BJ (cell line): ENCODE measurements at regions of chr3 and their contacts with region 1.

Region 1: DNA sequence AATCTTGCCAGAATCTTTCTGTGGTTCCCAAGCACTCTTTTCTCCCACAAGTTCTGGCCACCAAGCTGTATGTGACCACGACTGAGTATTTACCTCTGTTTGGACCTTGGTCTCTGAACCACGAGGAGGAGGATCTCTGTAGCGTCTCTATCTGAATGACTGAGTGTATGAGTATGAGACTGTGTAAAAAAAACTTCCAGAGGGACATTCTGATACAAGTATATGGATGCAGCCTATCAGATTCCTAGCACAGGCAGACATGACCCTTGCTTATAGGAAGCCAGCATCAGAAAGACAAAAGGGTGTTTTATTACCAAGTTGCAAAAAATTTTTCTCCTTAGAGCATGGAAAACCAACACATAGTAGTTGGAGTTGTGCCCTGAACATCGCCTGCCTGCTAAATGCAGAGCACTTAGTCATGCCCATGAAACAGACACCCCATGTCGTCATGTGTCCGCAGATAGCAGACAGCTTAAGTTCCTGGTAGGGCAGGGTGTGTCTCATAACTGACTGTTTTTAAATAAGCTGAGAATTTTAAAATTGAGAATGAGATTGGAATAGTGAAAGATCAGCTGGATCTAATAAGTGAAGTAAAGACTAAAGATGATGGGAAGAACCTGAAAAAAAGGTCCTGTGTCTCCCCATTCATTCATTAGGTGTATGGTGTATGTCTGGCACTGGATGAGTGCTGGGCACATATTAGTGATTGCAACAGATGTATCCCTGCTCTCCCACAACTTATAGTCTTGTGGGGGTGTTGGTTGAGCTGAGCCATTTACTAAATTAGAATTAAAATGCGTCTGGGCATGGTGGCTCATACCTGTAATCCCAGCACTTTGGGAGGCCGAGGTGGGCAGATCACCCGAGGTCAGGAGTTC is 30.9 kb downstream of the DAG1 start:
- DNase-seq: peak; percentile 95
- H3K4me3 ChIP-seq: no peak overlapping the region
- H3K27me3 ChIP-seq: no peaks in the 10 kb centered on the region
- CTCF ChIP-seq: no peak

Region 2: GRCh38 chr3:49305608-49306007 is 195.4 kb before region 1 on chr3:
- CTCF ChIA-PET with region 1: no interaction called
- POLR2A ChIA-PET with region 1: no interaction called
- DNase-seq: no peak
- H3K4me3 ChIP-seq: no peak overlapping the region
- H3K27me3 ChIP-seq: no peaks in the 10 kb centered on the region
- CTCF ChIP-seq: no peak

Region 3: DNA sequence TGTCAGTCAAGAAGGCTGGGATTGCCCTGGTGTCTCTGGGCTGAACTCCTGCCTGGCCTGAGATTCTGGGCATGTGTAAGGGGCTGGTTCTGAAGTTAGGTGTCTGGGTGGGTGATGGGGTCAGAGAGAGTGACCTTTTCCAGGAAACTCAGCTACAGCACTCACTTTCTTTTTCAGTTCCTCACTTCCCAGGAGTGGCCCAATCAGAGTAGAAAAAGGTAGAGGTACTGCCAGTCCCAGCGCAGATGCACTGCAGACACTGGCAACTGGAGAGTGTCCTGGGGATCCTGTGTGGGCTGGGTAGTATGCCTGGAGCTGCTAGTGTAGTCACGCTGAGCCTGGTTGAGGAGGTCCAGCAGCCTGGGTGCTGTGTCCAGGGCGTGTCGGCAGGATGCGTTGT is 126.7 kb after region 1 on chr3:
- CTCF ChIA-PET with region 1: no interaction called
- POLR2A ChIA-PET with region 1: interaction called, 13 read pairs
- DNase-seq: no peak
- H3K4me3 ChIP-seq: no peak overlapping the region
- H3K27me3 ChIP-seq: peaks cover 16% of the 10 kb centered on the region
- CTCF ChIP-seq: no peak

Region 4: DNA sequence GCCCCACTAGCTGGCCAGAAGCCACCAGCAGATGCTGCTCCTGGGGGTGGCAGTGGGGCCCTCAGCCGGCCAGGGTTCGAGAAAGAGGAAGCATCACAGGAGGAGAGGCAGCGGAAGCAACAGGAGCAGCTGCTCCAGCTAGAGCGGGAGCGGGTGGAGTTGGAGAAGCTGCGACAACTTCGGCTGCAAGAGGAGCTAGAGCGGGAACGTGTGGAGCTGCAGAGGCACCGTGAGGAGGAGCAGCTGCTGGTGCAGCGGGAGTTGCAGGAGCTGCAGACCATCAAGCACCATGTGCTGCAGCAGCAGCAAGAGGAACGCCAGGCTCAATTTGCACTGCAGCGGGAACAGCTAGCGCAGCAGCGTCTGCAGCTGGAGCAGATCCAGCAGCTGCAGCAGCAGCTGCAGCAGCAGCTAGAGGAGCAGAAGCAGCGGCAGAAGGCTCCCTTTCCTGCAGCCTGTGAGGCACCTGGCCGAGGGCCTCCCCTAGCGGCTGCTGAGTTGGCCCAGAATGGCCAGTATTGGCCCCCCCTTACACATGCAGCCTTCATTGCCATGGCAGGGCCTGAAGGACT is 155.7 kb after region 1 on chr3:
- CTCF ChIA-PET with region 1: no interaction called
- POLR2A ChIA-PET with region 1: no interaction called
- DNase-seq: no peak
- H3K4me3 ChIP-seq: no peak overlapping the region
- H3K27me3 ChIP-seq: peaks cover 4% of the 10 kb centered on the region; the same call in 1 of the 2 replicates
- CTCF ChIP-seq: 0 out of 2 replicates have a peak, but pooled peaks have one; percentile 23